Prostate gland (tissue), 2 donors: ENCODE measurements at regions of chr16 and their contacts with region 1.

Region 1: DNA sequence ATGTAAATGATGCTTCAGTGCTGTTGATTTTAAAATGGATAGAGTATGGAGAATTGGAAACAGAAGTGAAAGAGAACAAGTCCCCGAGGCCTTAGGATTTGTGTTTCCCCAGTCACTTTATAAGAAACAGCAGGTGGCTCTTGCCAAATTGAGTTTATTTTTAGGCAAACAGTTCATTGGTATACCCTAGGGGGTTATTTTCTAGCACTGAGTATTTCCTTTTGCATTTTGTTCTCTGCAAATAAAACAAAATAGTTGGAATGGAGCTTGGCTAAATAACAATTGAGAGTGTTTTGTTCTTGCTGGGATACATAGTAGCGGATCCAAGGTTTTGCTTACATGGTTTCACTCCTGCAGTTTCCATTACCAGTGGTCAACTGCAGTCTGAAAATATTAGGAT is 591.1 kb upstream of the C16orf82 start:
- DNase-seq: no peak
- H3K4me3 ChIP-seq: no peak overlapping the region
- H3K27ac ChIP-seq: no peak overlapping the region
- H3K4me1 ChIP-seq: no peaks in the 10 kb centered on the region
- H3K27me3 ChIP-seq: no peaks in the 10 kb centered on the region
- CTCF ChIP-seq: no peak
- POLR2A ChIP-seq: no peak

Region 2: GRCh38 chr16:26530584-26531289 is 55.1 kb after region 1 on chr16:
- intact Hi-C with region 1: loop called (anchors 10 kb)
- DNase-seq: no peak
- H3K4me3 ChIP-seq: no peak overlapping the region
- H3K27ac ChIP-seq: no peak overlapping the region
- H3K4me1 ChIP-seq: no peaks in the 10 kb centered on the region
- H3K27me3 ChIP-seq: no peaks in the 10 kb centered on the region
- CTCF ChIP-seq: no peak
- POLR2A ChIP-seq: no peak